Naive thymus-derived CD4-positive, alpha-beta T cell (primary cell): ENCODE measurements at regions of chr17 and their contacts with region 1.

Region 1: DNA sequence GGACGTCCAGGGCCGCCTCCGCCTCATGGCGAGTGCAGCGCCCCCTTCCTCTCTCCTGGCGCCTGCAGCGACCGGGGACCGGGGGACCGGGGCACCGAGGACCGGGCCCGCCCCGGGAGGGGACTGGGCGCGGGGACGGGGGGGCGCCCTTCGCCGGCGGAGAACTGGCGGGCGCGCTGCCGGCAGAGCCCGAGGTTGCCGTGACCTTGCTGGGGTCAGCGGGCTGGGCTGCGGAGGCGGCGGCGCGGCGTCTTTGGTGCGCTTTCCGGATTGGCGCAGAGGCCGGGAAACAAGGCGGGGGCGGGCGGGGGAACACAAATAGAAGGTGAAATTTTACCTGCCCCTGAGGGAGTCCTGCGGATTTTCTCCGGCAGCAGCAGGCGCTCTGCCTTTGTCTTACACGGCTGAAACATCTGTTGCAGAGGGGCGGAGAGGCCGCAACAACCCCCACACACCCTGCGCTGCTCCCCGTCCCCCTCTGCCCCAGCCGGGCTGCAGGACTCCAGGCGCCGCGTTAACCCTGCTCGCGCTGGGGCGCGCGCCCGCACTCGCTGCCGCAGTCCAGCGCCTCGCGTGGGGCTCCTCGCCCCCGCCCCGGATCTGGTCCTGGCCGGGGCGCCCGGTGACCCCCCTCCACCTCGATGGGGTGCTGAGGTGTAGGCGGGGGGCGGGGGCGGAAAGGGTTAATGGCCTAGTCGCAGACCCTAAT is 53.5 kb downstream of the SREBF1 start:
- DNase-seq: peak; percentile 39 to 67 (median 63)
- ATAC-seq: peak; percentile 71
- H3K4me3 ChIP-seq: peak overlapping the region; percentile 72
- H3K4me3 Mint-ChIP-seq: peak overlapping the region; percentile 80 to 95 (median 91)
- H3K27ac ChIP-seq: peak overlapping the region; percentile 67
- H3K27ac Mint-ChIP-seq: peak overlapping the region in 7 of 9 donors; percentile 10 to 88 (median 74)
- H3K4me1 ChIP-seq: peaks cover 7 to 15% of the 10 kb centered on the region in 2 donors
- H3K4me1 Mint-ChIP-seq: peaks cover 15 to 32% (median 25%) of the 10 kb centered on the region in 7 donors
- H3K27me3 ChIP-seq: no peaks in the 10 kb centered on the region
- H3K27me3 Mint-ChIP-seq: peaks cover 0 to 29% (median 0%) of the 10 kb centered on the region in 5 donors

Region 2: GRCh38 chr17:17729620-17730249 is 53.5 kb before region 1 on chr17:
- CTCF ChIA-PET with region 1: interaction called, 6 read pairs
- POLR2A ChIA-PET with region 1: interaction called, 3 read pairs
- intact Hi-C with region 1: loop called in 1 of 2 experiments (anchors 1 kb)
- DNase-seq: peak in 8 of 9 donors; percentile 39 to 74 (median 63)
- ATAC-seq: peak; percentile 87
- H3K4me3 ChIP-seq: no peak overlapping the region
- H3K4me3 Mint-ChIP-seq: peak overlapping the region in 1 of 10 donors; percentile 8
- H3K27ac ChIP-seq: no peak overlapping the region
- H3K27ac Mint-ChIP-seq: peak overlapping the region in 7 of 9 donors; percentile 35 to 92 (median 68)
- H3K4me1 ChIP-seq: peaks cover 0 to 15% of the 10 kb centered on the region in 2 donors
- H3K4me1 Mint-ChIP-seq: peaks cover 11 to 40% (median 35%) of the 10 kb centered on the region in 7 donors
- H3K27me3 ChIP-seq: no peaks in the 10 kb centered on the region
- H3K27me3 Mint-ChIP-seq: peaks cover 0 to 5% (median 0%) of the 10 kb centered on the region in 5 donors

Region 3: GRCh38 chr17:17739388-17740066 is 43.7 kb before region 1 on chr17:
- CTCF ChIA-PET with region 1: interaction called, 3 read pairs
- POLR2A ChIA-PET with region 1: interaction called, 3 read pairs
- intact Hi-C with region 1: loop called in 1 of 2 experiments (anchors 5 kb)
- DNase-seq: no peak
- ATAC-seq: no peak
- H3K4me3 ChIP-seq: no peak overlapping the region
- H3K4me3 Mint-ChIP-seq: peak overlapping the region in 5 of 10 donors; percentile 2 to 55 (median 45)
- H3K27ac ChIP-seq: peak overlapping the region; percentile 43
- H3K27ac Mint-ChIP-seq: peak overlapping the region in 8 of 9 donors; percentile 26 to 86 (median 70)
- H3K4me1 ChIP-seq: peaks cover 0 to 12% of the 10 kb centered on the region in 2 donors
- H3K4me1 Mint-ChIP-seq: peaks cover 20 to 46% (median 36%) of the 10 kb centered on the region in 7 donors
- H3K27me3 ChIP-seq: no peaks in the 10 kb centered on the region
- H3K27me3 Mint-ChIP-seq: peaks cover 0 to 5% (median 0%) of the 10 kb centered on the region in 5 donors

Region 4: DNA sequence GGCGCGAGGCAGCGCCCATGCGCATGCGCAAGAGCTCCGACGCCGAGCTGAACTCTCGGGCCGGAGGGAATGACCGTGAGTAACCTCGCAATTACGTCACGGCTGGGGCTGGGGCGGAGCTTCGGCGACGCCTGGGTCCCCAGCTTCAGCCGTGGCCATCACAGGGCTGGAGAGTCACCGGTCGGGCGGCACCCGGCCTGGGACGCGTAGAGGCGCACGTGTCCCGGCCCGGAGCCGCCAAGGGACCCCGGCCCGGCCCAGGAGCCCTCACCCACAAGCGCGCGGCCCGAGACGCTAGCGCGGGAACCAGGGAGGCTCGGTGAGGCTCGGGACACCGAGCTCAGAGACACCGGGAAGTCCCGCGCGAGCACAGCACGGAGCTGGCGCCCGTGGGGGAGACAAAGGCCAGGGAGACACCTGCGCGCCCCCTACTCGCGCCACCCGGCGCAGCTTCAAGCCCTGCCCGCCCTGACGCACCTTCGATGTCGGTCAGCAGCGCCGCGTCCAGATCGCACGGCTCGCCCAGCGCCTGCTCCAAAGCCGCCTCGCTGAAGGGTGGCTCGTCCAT is 53.1 kb after region 1 on chr17:
- CTCF ChIA-PET with region 1: no interaction called
- POLR2A ChIA-PET with region 1: no interaction called
- intact Hi-C with region 1: loop called in 1 of 2 experiments (anchors 5 kb)
- DNase-seq: peak; percentile 93 to 99 (median 97)
- ATAC-seq: peak; percentile 85
- H3K4me3 ChIP-seq: peak overlapping the region; percentile 86
- H3K4me3 Mint-ChIP-seq: peak overlapping the region; percentile 85 to 95 (median 90)
- H3K27ac ChIP-seq: peak overlapping the region; percentile 99
- H3K27ac Mint-ChIP-seq: peak overlapping the region; percentile 94 to 99 (median 98)
- H3K4me1 ChIP-seq: peaks cover 18 to 60% of the 10 kb centered on the region in 2 donors
- H3K4me1 Mint-ChIP-seq: peaks cover 46 to 79% (median 75%) of the 10 kb centered on the region in 7 donors
- H3K27me3 ChIP-seq: no peaks in the 10 kb centered on the region
- H3K27me3 Mint-ChIP-seq: no peaks in the 10 kb centered on the region

Region 5: GRCh38 chr17:17859909-17860765 is 76.9 kb after region 1 on chr17:
- CTCF ChIA-PET with region 1: interaction called, 6 read pairs
- POLR2A ChIA-PET with region 1: no interaction called
- intact Hi-C with region 1: loop called in 1 of 2 experiments (anchors 2 kb)
- DNase-seq: peak; percentile 50 to 77 (median 68)
- ATAC-seq: peak; percentile 97
- H3K4me3 ChIP-seq: no peak overlapping the region
- H3K4me3 Mint-ChIP-seq: no peak overlapping the region
- H3K27ac ChIP-seq: no peak overlapping the region
- H3K27ac Mint-ChIP-seq: peak overlapping the region in 3 of 9 donors; percentile 46 to 70 (median 58)
- H3K4me1 ChIP-seq: peaks cover 0 to 28% of the 10 kb centered on the region in 2 donors
- H3K4me1 Mint-ChIP-seq: peaks cover 13 to 67% (median 52%) of the 10 kb centered on the region in 7 donors
- H3K27me3 ChIP-seq: no peaks in the 10 kb centered on the region
- H3K27me3 Mint-ChIP-seq: no peaks in the 10 kb centered on the region